MCF 10A (cell line): ENCODE measurements at regions of chr4 and their contacts with region 1.

Region 1: GRCh38 chr4:173211838-173212237 is 43.2 kb downstream of the GALNT7 start:
- DNase-seq: peak; percentile 77
- H3K4me3 Mint-ChIP-seq: no peak overlapping the region
- H3K27ac Mint-ChIP-seq: no peak overlapping the region
- H3K4me1 Mint-ChIP-seq: peaks cover 31% of the 10 kb centered on the region
- H3K27me3 Mint-ChIP-seq: no peaks in the 10 kb centered on the region
- CTCF ChIP-seq: no peak

Region 2: DNA sequence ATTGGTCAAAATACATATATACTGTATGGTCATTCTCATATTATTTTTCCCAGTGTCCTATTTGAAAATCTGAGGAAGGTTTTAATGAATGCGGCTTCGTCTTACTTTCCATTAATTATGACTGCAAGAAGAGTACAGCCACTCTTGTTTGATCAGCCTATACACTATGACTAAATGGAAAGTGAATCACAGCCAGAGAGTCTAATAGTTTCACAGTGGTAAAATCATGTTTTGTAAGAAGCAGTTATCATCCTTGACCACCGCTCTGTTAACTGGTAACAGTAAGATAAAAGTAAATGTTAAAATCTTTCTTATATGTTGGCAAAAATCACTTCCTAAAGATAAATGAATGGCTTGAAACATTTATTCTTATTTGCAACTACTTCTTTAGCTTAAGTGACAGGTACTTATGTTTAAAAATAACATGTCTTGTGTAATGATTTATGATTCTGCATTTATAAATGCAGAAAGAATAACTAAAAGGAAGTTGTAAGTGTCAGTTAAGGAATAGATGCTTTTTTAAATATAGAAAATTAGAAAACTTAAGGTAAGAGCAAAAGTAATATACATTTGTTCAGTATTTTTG is 30.0 kb before region 1 on chr4:
- CTCF ChIA-PET with region 1: interaction called, 3 read pairs
- POLR2A ChIA-PET with region 1: interaction called, 13 read pairs
- intact Hi-C with region 1: no loop called
- DNase-seq: peak; percentile 47
- H3K4me3 Mint-ChIP-seq: no peak overlapping the region
- H3K27ac Mint-ChIP-seq: peak overlapping the region; percentile 31
- H3K4me1 Mint-ChIP-seq: peaks cover 22% of the 10 kb centered on the region
- H3K27me3 Mint-ChIP-seq: no peaks in the 10 kb centered on the region
- CTCF ChIP-seq: no peak

Region 3: DNA sequence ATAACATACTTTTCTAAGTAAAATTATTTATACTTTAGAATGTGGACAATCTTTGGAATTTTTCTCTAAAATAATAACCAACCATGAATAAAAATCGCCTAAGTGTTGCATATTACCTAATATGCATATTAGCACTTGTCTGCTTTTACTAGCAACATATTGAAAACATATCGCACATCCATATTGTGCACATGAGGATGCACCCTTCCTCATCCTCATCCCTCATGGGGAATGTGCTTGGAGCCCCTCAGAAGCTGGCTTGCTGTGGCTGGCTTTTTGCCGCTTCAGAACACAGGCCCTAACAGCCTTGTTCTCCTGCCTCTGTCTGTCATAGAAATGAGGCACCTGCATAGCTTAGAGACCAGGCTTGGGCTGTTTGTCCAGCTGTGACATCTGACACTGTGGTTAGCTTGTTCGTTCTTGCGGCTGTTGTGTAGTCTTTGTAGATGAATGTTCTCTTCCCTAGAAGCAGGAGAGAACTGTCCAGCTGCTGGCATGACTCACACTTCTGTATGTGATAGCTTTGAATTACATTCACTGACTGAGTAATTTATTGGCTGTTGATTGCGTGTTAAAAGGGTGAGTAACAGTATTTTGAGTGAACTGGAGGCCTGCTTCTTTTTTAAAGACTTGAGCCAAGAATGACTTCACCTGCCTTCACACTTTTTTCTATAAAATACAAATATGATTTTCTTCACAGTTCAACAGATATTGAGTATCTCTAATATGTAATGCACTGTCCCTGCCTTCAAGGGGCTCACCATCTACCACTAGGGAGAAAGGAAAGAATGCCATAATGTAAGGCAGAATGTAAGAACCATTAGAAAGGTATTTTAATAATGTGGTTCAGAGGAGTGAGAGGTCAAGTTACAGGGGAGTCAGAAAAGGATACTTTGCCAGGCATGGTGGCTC is 40.4 kb after region 1 on chr4:
- CTCF ChIA-PET with region 1: interaction called, 7 read pairs
- POLR2A ChIA-PET with region 1: interaction called, 7 read pairs
- intact Hi-C with region 1: loop called (anchors 5 kb)
- DNase-seq: peak; percentile 98
- H3K4me3 Mint-ChIP-seq: no peak overlapping the region
- H3K27ac Mint-ChIP-seq: peak overlapping the region; percentile 63
- H3K4me1 Mint-ChIP-seq: peaks cover 28% of the 10 kb centered on the region
- H3K27me3 Mint-ChIP-seq: no peaks in the 10 kb centered on the region
- CTCF ChIP-seq: no peak